ENCODE measurements at regions of chr1 and their contacts with region 1.

Region 1: GRCh38 chr1:207885129-207886032 is 25.5 kb downstream of the CD34 start:
- DNase-seq: peak; percentile 85
- ATAC-seq: peak; percentile 62
- H3K4me3 Mint-ChIP-seq: no peak overlapping the region
- H3K27ac Mint-ChIP-seq: peak overlapping the region; percentile 97
- H3K4me1 Mint-ChIP-seq: peaks cover 35% of the 10 kb centered on the region
- H3K27me3 Mint-ChIP-seq: peaks cover 2% of the 10 kb centered on the region

Region 2: GRCh38 chr1:207751790-207752455 is 133.5 kb before region 1 on chr1 and contains the start of gene CD46:
- CTCF ChIA-PET with region 1: no interaction called
- POLR2A ChIA-PET with region 1: no interaction called
- intact Hi-C with region 1: loop called in 1 of 2 experiments (anchors 5 kb)
- DNase-seq: peak; percentile 97
- ATAC-seq: peak; percentile 97
- H3K4me3 Mint-ChIP-seq: peak within 1 kb of the TSS; percentile 99
- H3K27ac Mint-ChIP-seq: peak within 1 kb of the TSS; percentile 97
- H3K4me1 Mint-ChIP-seq: peaks cover 62% of the 10 kb centered on the region
- H3K27me3 Mint-ChIP-seq: no peaks in the 10 kb centered on the region
- total RNA-seq, gene CD46: 92.2 to 92.7 TPM

Region 3: GRCh38 chr1:207841901-207842300 is 43.5 kb before region 1 on chr1:
- CTCF ChIA-PET with region 1: interaction called, 10 read pairs
- POLR2A ChIA-PET with region 1: no interaction called
- intact Hi-C with region 1: no loop called
- DNase-seq: no peak
- ATAC-seq: no peak
- H3K4me3 Mint-ChIP-seq: no peak overlapping the region
- H3K27ac Mint-ChIP-seq: no peak overlapping the region
- H3K4me1 Mint-ChIP-seq: peaks cover 54% of the 10 kb centered on the region
- H3K27me3 Mint-ChIP-seq: no peaks in the 10 kb centered on the region

Region 4: GRCh38 chr1:207897188-207897587 is 11.8 kb after region 1 on chr1:
- CTCF ChIA-PET with region 1: interaction called, 28 read pairs
- POLR2A ChIA-PET with region 1: no interaction called
- intact Hi-C with region 1: no loop called
- DNase-seq: no peak
- ATAC-seq: no peak
- H3K4me3 Mint-ChIP-seq: no peak overlapping the region
- H3K27ac Mint-ChIP-seq: no peak overlapping the region
- H3K4me1 Mint-ChIP-seq: no peaks in the 10 kb centered on the region
- H3K27me3 Mint-ChIP-seq: no peaks in the 10 kb centered on the region

Region 5: GRCh38 chr1:207997486-207998268 is 112.3 kb after region 1 on chr1:
- CTCF ChIA-PET with region 1: interaction called, 18 read pairs
- POLR2A ChIA-PET with region 1: no interaction called
- intact Hi-C with region 1: loop called in 1 of 2 experiments (anchors 1 kb)
- DNase-seq: peak; percentile 75
- ATAC-seq: peak; percentile 87
- H3K4me3 Mint-ChIP-seq: no peak overlapping the region
- H3K27ac Mint-ChIP-seq: no peak overlapping the region
- H3K4me1 Mint-ChIP-seq: no peaks in the 10 kb centered on the region
- H3K27me3 Mint-ChIP-seq: peaks cover 9% of the 10 kb centered on the region

Measured in activated CD4-positive, alpha-beta T cell treated with anti-CD3 and anti-CD28 coated beads for 36 hours (primary cell).